ENCODE measurements at regions of chr7 and their contacts with region 1.

Region 1: DNA sequence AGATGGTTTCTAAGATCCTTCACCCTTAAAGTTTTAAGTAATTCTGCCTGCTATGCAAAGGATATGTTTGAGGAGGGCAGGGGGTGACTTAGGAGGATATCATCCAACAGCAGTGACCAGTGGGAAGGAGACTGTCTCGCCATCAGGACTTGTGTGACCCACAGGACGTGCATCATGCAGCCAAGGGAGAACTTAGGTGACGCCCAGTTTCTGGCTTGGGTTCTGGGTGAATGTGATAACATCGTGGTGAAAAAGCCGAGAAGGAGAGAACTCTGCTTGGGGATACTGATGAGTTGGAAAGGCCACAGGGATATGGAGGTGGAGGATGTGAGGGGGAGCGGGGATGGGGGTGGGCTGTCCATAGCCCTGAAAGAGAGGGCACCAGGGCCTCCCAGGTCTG is 3.8 kb downstream of the WIPI2 start:
- DNase-seq: no peak
- H3K4me3 Mint-ChIP-seq: no peak overlapping the region
- H3K27ac Mint-ChIP-seq: no peak overlapping the region
- H3K4me1 Mint-ChIP-seq: peaks cover 16% of the 10 kb centered on the region
- H3K27me3 Mint-ChIP-seq: no peaks in the 10 kb centered on the region

Region 2: DNA sequence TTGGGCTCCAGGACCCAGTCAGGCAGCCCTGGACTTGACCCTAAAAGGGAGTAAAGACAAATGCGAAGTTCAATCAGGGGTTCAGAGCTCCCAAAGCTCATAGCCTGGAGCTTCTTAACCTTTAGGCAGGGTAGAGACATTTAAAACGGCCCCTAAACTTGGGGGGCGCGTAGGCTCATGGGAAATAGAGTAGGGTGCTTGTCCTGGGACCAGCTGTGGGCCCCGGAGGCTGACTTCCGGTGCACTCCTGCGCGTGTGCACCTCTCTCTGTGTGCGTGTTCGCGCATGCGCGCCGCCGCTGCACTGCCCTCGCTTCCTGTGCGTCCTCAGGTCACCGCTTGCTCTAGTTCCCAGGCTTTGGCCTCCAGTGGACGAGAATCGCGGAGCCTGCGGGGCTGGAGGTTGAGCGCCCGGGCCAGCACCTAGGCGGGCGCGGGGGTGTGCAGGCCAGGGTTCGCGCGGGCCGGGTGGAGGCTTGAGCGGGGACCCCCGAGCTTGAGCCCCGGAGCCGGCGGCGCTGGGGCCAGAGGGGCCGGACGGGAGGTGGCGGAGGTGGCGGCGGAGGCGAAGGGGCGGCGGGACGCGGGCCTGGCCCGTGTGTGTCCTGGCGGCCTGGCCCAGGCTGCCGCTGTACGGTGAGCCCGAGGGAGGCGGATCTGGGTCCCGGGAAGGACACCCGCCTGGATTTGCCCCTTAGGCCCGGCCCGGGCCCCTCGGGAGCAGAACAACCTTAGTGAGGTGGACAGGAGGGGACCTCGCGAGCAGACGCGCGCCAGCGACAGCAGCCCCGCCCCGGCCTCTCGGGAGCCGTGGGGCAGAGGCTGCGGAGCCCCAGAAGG is 148.1 kb before region 1 on chr7 and contains the start of gene RBAK:
- intact Hi-C with region 1: loop called (anchors 10 kb)
- DNase-seq: peak; percentile 88
- H3K4me3 Mint-ChIP-seq: peak within 1 kb of the TSS; percentile 95
- H3K27ac Mint-ChIP-seq: peak within 1 kb of the TSS; percentile 86
- H3K4me1 Mint-ChIP-seq: peaks cover 20% of the 10 kb centered on the region
- H3K27me3 Mint-ChIP-seq: no peaks in the 10 kb centered on the region
- total RNA-seq, gene RBAK: 14.1 and 15.4 TPM in 2 replicates

Region 3: DNA sequence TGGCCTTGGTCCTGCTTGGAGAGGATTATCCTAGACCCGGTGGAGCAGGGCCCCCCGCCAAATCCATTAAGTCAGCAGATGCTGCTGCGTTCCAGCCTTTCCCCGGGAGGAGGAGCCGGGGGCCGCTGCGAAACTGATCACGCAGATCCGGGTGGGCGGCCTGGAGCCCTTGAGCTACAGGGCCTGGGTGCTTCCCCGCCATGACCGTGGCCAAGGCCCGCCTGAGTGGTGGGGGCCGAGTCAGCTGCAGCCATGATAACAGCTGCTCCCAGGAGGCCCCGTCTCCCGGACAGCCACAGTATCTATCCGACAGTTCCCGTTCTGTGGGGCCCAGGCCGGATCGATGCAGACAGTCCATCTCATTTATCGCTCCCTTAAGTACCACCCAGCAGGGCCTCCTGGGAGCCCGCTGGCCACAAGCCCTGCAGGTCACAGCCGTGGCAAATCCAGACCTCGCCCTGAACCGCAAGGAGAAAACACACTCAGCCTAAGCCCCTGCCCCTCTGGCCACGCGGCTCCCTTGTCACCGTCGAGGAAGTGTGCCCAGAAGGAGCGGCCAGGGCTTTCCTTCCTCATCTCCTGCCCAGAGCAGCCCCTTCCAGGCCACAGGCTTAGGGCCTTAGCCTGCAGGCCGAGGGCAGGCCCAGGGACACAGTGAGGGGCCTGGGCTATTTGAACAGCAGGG is 54.5 kb after region 1 on chr7:
- intact Hi-C with region 1: no loop called
- DNase-seq: no peak
- H3K4me3 Mint-ChIP-seq: no peak overlapping the region
- H3K27ac Mint-ChIP-seq: no peak overlapping the region
- H3K4me1 Mint-ChIP-seq: no peaks in the 10 kb centered on the region
- H3K27me3 Mint-ChIP-seq: no peaks in the 10 kb centered on the region